Head of caudate nucleus (tissue), 42 donors: ENCODE measurements at regions of chr9 and their contacts with region 1.

Region 1: GRCh38 chr9:127916665-127917613 is at the start of gene ST6GALNAC4:
- DNase-seq: peak; percentile 88 to 98 (median 96)

Region 2: DNA sequence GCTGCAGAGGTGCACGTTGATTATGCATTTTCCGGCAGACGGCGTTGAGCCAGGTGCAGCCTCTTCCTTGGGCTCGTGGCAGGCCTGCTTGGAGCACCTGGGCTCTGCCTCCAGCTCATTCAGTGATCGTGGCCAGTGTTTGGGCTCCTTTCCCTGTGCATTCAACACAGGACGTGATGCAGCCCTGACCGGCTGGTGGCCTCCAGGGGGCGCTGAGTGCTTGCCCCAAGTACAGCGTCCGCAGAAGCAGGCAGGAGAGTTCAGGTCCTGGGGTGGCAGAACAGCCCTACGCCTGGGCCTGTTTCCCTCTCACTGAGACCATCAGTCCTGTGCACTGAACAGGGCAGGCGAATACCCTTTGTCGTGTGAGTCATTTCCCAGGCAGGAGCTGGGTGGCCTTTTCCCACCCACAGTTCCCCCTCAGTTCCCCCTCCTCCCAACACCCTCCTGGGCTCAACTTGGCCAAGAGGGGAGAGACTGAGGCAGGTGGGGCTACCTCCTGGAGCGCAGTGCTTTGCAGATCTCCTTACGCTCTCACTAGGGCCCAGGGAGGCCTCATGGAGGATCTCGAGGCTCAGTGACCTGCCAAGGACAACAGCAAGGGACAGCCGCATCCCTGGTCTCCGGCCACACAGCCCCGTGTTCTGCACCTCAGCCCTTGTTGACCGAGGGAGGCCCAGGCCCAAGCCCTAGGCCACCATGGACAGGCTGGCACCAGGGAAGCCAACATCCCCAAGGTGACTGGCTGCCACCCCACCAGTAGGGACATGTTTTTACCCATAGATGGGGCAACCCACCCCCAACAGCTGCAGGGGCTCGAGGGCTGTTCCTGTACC is 412.8 kb before region 1 on chr9:
- intact Hi-C with region 1: loop called (anchors 10 kb)
- DNase-seq: peak; percentile 57 to 93 (median 84)

Region 3: DNA sequence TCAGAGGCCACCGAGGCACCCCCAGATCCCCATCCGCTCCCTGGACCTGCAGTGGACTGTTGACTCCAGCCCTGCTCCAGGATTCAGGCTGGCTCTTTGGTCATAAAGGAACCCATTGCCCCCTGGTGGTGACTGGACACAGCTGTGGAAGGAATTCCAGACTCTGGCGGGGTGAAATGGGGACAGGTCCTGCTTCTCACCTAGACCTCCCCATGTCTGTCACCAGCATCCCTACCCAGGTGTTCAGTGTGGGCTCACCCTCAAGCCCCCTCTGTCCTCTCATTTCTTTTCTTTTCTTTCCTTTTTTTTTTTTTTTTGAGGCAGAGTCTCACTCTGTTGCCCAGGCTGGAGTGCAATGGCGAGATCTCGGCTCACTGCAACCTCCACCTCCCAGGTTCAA is 330.4 kb before region 1 on chr9:
- intact Hi-C with region 1: loop called (anchors 5 kb)
- DNase-seq: peak; percentile 46 to 93 (median 80)

Region 4: GRCh38 chr9:127785023-127785932 is 131.7 kb before region 1 on chr9:
- intact Hi-C with region 1: loop called (anchors 10 kb)
- DNase-seq: peak; percentile 61 to 95 (median 87)

Region 5: DNA sequence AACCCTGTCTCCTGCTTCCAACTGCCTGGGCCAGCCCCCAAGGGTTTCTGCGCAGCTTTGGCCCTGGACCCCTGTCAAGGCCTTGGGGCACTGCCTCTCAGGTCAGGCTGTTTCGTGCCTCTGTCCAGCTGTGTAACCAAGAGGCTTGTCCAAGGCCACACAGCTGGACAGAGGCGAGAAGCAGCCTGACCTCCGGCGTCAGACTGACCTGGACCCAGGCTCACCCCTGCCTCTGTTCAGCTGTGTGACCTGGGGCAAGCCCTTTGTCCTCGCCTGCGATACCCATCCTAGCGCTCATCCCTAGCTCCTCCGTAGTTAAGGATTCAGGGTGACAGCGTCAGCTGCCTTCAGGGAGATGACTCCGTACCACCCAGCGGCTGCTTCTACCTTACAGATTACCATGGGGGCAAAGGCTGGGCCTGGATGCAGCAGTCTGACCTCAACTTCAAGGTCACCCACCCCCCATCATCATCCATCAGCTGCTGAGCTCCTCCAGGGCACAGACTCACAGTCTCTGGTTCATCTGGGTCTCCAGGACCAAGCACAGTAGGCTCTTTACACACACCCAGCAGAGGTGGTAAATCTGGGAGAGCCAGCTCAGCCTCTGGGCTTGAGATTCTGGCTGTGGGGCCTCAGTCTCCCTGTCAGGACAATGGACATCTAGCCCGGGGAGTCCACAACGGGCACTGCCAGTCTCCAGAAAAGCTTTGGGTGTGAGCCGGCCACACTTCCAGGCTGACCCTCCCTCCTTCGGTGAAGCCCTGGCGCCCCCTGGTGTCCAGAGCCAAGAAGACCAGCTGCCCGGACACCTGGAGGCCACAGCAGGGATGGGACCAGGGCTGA is 47.4 kb before region 1 on chr9:
- intact Hi-C with region 1: loop called (anchors 5 kb)
- DNase-seq: peak; percentile 54 to 92 (median 82)